Stomach (tissue), 19 donors: ENCODE measurements at regions of chr3 and their contacts with region 1.

Region 1: GRCh38 chr3:17032407-17033034 is 147.8 kb downstream of the PLCL2 start:
- DNase-seq: peak in 1 of 2 donors; percentile 72
- H3K4me3 ChIP-seq: no peak overlapping the region
- H3K27ac ChIP-seq: no peak overlapping the region
- H3K4me1 ChIP-seq: peaks cover 0 to 37% (median 3%) of the 10 kb centered on the region in 4 donors
- H3K27me3 ChIP-seq: no peaks in the 10 kb centered on the region
- CTCF ChIP-seq: peak in 5 of 7 experiments; percentile 55 to 83 (median 69)
- EP300 ChIP-seq: no peak
- POLR2A ChIP-seq: no peak

Region 2: GRCh38 chr3:16600780-16601539 is 431.6 kb before region 1 on chr3:
- intact Hi-C with region 1: loop called (anchors 10 kb)
- DNase-seq: peak; percentile 89 to 93
- H3K4me3 ChIP-seq: no peak overlapping the region
- H3K27ac ChIP-seq: no peak overlapping the region
- H3K4me1 ChIP-seq: peaks cover 0 to 7% (median 0%) of the 10 kb centered on the region in 4 donors
- H3K27me3 ChIP-seq: peaks cover 0 to 5% (median 0%) of the 10 kb centered on the region in 3 donors
- CTCF ChIP-seq: peak in 5 of 7 experiments; percentile 66 to 87 (median 70)
- EP300 ChIP-seq: no peak
- POLR2A ChIP-seq: no peak

Region 3: DNA sequence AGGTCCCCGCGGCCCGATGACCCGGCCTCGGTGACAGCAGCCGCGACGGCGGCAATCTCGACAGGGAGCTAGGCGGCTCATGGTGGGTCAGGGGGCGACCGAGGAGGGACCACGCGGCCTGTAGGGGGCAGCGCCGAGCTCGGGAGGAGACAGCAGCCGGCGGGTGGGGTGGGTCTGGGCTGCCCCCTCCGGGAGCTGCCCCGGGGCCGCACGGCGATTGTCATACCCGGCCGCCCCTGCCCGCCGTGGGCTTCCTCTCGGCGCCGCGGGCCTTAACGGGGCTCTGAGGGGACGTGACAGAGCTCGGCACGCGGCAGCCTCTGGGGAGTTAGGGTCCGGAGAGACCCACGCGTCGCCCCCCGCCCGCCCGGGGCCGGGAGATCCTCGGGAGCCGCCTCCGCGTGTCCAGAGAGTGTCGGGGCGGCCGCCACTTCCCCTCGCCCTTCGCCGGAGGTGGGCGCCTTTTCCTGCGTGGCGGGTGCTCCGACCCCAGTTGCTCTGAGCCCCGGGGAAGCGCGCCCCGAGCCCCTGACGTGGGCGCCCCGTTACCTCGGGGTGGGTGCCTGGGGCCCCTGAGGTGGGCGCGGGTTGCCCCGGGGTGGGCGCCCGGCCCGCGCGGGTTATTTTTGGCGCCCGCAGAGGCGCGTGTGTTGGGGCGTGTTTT is 148.3 kb before region 1 on chr3:
- intact Hi-C with region 1: loop called (anchors 10 kb)
- DNase-seq: peak; percentile 58 to 92
- H3K4me3 ChIP-seq: peak overlapping the region; percentile 67 to 90 (median 80)
- H3K27ac ChIP-seq: peak overlapping the region; percentile 76 to 94 (median 92)
- H3K4me1 ChIP-seq: peaks cover 7 to 53% (median 30%) of the 10 kb centered on the region in 4 donors
- H3K27me3 ChIP-seq: no peaks in the 10 kb centered on the region
- CTCF ChIP-seq: peak in 5 of 7 experiments; percentile 13 to 74 (median 49)
- EP300 ChIP-seq: no peak
- POLR2A ChIP-seq: no peak

Region 4: DNA sequence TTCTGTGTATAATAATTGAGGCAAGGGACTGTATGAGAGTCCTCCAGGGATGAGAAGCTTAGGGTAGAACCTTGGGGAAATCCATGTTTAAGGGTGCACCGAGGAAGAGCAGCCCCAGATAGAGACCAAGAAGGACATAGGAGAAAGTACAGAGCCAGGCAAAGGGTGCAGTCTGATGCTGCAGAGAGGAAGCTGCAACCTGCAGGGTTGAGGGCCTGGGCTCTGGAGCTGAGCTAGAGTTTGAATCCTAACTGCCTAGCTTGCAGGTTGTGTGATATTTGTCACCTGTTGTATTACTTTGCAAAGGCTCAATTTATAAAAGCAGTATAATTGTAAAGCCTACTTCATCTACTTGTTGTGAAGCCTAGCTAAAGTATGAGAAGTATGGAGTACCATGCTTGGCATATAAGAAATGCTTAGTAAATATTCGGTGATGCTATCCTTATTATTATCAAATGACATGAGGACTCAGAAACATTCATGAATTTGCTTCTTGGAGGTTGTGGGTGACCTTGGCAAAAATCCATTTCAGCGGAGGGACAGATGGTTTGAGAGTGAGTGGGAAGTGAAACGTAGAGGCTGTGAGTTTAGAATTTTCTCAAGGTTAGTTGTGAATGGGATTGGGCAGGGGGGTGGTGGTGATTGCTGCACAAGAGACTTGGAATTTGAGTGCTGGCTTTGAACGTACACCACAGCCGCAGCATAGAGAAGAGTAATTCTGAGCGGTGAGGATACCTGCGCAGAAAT is 104.0 kb before region 1 on chr3:
- intact Hi-C with region 1: no loop called
- DNase-seq: no peak
- H3K4me3 ChIP-seq: no peak overlapping the region
- H3K27ac ChIP-seq: no peak overlapping the region
- H3K4me1 ChIP-seq: peaks cover 3 to 17% (median 11%) of the 10 kb centered on the region in 4 donors
- H3K27me3 ChIP-seq: no peaks in the 10 kb centered on the region
- CTCF ChIP-seq: no peak
- EP300 ChIP-seq: no peak
- POLR2A ChIP-seq: no peak